ENCODE measurements at regions of chr9 and their contacts with region 1.

Region 1: GRCh38 chr9:12813960-12814876 is 39.4 kb downstream of the LURAP1L start:
- DNase-seq: peak; percentile 99
- H3K4me3 ChIP-seq: peak overlapping the region; percentile 48 to 67 (median 50)
- H3K27ac ChIP-seq: peak overlapping the region; percentile 100
- H3K4me1 ChIP-seq: peaks cover 58% of the 10 kb centered on the region
- H3K27me3 ChIP-seq: no peaks in the 10 kb centered on the region
- CTCF ChIP-seq: peak in 1 of 2 donors; percentile 39

Region 2: GRCh38 chr9:12740845-12741244 is 73.4 kb before region 1 on chr9:
- CTCF ChIA-PET with region 1: no interaction called
- dilution Hi-C with region 1: no loop called
- in situ Hi-C with region 1: no loop called
- intact Hi-C with region 1: loop called (anchors 5 kb)
- DNase-seq: peak; percentile 88
- H3K4me3 ChIP-seq: no peak overlapping the region
- H3K27ac ChIP-seq: peak overlapping the region; percentile 87
- H3K4me1 ChIP-seq: peaks cover 18% of the 10 kb centered on the region
- H3K27me3 ChIP-seq: no peaks in the 10 kb centered on the region
- CTCF ChIP-seq: no peak

Region 3: GRCh38 chr9:12784461-12785259 is 29.6 kb before region 1 on chr9:
- CTCF ChIA-PET with region 1: no interaction called
- dilution Hi-C with region 1: no loop called
- in situ Hi-C with region 1: loop called (anchors 5 kb)
- intact Hi-C with region 1: loop called (anchors 1 kb)
- DNase-seq: peak; percentile 98
- H3K4me3 ChIP-seq: no peak overlapping the region
- H3K27ac ChIP-seq: peak overlapping the region; percentile 98
- H3K4me1 ChIP-seq: peaks cover 22% of the 10 kb centered on the region
- H3K27me3 ChIP-seq: no peaks in the 10 kb centered on the region
- CTCF ChIP-seq: no peak

Region 4: DNA sequence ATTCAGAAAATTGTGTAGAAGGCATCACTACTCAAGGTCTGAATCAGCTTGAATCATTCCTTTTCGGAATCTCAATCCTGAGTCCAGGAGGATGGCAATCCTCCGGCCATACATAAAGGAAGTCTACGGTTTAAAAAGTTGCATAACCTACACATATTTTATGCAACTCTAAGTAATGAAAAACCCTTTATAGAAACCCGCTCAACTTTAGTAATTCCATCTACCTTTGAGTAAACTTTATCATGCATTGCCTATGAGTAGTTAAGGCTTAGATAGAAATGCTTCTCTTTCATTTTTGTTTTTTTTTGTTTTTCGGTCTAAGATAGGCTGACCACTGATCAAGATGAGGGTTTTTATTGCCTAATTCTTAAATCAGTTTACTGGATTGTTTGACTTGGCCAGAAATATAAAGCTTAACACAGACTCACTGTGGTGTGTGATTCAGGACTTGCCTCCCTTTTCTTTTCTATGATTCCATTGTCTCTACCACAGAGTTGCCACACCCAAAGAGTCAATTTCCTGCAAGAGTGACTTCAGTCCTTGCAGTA is 45.6 kb after region 1 on chr9:
- CTCF ChIA-PET with region 1: no interaction called
- dilution Hi-C with region 1: loop called (anchors 5 kb)
- in situ Hi-C with region 1: loop called (anchors 10 kb)
- intact Hi-C with region 1: loop called (anchors 1 kb)
- DNase-seq: peak; percentile 96
- H3K4me3 ChIP-seq: peak overlapping the region; percentile 23 to 39 (median 34)
- H3K27ac ChIP-seq: peak overlapping the region; percentile 99
- H3K4me1 ChIP-seq: peaks cover 26% of the 10 kb centered on the region
- H3K27me3 ChIP-seq: no peaks in the 10 kb centered on the region
- CTCF ChIP-seq: no peak

Region 5: DNA sequence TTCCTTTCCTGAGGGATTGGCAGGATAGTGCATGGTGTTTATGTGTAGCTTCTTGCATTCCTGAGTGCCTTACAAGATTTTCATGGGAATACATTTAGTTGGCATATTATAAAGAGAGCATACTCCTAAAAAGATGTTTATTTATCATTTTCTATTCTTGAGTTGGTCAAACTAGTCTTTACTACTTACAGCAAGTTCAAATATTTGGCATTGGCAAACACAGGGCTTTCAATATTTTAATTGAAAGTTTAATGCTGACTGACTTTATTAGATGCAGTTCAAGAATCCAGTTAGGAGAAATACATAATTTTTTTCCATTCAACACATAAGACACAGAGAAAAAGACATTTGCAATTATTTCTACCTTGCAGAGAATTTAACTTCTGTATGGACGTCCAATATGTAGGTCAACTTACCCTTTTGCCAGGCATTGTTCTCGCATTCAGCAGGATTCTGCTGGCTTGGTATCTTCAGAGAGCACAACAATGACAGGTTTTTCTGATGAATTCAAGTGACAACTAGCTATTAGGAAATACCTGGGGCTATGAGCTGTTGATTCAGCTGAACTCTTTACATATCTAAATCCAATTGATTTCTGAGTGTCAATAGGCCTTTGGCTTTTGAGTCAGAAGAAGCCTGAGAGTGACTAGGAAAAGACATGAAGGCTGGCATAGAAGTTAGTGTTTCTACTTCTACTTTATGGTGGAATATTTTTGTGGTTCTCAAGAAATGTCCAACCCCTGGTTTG is 90.2 kb after region 1 on chr9:
- CTCF ChIA-PET with region 1: no interaction called
- dilution Hi-C with region 1: no loop called
- in situ Hi-C with region 1: no loop called
- intact Hi-C with region 1: no loop called
- DNase-seq: no peak
- H3K4me3 ChIP-seq: no peak overlapping the region
- H3K27ac ChIP-seq: no peak overlapping the region
- H3K4me1 ChIP-seq: no peaks in the 10 kb centered on the region
- H3K27me3 ChIP-seq: peaks cover 1% of the 10 kb centered on the region
- CTCF ChIP-seq: no peak

Region 6: DNA sequence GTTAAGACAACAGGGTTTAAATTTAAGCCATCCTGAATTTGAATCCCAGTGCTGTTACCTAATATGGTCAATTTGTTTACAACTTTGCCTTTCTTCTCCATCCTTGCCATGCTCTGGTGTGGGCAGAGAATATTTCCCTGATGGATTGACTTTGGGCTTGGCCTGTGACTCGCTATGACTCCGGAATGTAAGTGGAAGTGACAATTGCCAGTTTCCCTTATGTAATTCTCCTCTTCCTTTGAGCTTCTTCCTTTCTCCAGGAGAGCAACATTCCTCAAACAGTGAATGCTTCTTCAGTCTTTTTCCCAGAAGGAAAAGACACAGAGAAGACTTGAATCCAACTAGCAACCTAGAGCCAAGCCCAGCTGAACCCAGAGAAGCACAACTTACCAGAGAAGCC is 119.7 kb after region 1 on chr9:
- CTCF ChIA-PET with region 1: no interaction called
- dilution Hi-C with region 1: no loop called
- in situ Hi-C with region 1: no loop called
- intact Hi-C with region 1: loop called (anchors 1 kb)
- DNase-seq: peak; percentile 76
- H3K4me3 ChIP-seq: no peak overlapping the region
- H3K27ac ChIP-seq: no peak overlapping the region
- H3K4me1 ChIP-seq: no peaks in the 10 kb centered on the region
- H3K27me3 ChIP-seq: no peaks in the 10 kb centered on the region
- CTCF ChIP-seq: no peak